Head of caudate nucleus (tissue), 42 donors: ENCODE measurements at regions of chr2 and their contacts with region 1.

Region 1: DNA sequence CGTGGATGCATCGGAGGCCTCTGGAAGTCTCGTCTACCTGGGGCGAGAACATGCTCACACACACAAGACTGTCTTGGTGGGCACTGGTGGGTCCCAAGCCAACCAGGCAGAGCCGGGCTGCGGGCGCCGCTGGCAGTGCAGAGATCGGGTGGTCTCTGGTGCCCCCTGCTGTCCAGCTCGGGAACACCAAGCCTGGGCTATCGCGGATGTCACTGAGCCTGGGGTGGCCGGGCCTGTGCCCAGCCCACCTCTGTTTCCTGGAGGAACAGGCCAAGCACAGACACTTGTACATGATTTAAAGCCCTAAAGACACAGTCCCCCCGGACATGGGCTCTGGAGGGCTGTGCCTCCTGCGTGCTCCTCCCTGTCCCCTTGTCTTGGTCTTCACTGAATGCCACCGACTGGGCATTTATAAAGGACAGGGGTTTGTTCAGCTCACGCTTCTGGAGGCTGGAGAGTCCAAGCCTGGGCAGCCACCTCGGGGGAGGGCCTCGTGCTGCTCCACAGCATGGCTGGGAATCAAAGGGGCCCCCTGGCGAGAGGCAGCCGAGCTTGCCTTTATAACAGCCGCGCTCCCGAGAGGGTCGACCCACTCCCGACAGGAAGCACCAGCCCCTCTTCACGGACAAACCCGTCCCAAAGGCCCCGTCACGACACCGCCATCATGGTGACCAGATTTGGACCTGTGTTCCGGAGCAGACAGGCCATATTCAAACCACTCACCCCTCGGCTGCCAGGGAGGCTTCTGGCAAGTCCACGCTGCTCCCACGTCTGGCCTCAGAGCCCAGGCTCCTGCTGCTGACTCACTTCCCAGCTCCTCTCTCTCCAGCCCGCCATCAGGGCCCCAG is 3.6 kb upstream of the OTOS start:
- DNase-seq: peak; percentile 65 to 95 (median 86)

Region 2: DNA sequence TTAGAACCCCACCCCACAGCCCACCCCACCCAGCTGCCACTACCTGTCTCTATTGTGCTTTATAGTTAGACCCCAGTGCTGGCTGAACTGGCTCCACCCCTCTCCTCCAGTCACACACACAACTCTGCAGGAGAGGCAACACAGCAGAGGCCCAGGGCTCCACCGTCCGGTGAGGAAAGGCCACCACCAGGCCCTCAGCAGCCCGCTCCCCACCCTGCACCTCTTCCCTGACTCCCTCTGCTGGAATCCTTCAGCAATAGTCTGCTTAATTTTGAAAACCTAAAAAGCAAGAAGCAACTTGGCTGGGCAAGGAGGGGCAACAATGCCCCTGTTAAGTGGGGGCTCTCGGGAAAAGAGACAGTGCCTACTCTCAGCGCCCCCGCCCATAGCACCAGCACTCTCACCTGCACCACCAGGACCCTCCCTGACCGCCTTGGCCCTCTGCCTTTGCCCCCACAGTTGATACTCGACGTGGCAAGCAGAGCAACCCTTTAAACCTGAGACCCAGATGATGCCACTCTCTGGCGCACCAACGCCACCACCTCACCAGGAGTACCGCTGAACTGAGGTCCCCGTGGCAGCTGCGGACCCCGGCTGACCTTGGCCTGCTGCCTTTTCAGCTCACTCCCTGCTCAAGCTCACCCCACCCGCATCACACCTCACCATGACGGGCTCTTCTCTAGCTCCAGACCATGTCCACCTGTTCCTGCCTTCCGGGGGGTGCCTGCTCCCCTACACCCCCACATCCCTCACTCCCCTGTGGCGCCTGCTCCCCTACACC is 164.6 kb before region 1 on chr2:
- intact Hi-C with region 1: no loop called
- DNase-seq: peak in 29 of 42 donors; percentile 11 to 78 (median 58)

Region 3: GRCh38 chr2:240021488-240022104 is 122.4 kb before region 1 on chr2:
- intact Hi-C with region 1: loop called (anchors 10 kb)
- DNase-seq: peak; percentile 40 to 87 (median 72)

Region 4: GRCh38 chr2:240056678-240057077 is 87.3 kb before region 1 on chr2:
- intact Hi-C with region 1: loop called (anchors 5 kb)
- DNase-seq: no peak

Region 5: DNA sequence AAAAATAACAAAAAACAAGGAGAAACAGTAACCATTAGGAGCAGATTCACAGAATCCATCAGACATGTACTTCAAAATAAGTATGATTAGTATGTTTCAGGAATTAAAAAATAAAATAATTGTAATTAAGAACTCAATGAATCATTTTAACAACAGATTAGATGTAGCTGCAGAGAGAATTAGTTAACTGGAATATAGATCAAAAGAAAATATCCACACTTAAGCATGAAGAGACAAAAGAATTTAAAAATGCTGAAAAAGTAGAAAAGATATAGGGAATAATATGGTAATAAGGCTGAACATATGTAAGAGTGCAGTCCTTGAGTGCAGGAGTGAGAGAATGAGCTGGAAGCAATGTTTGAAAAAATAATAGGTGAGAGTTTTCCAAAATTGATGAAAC is 66.6 kb before region 1 on chr2:
- intact Hi-C with region 1: no loop called
- DNase-seq: no peak

Region 6: DNA sequence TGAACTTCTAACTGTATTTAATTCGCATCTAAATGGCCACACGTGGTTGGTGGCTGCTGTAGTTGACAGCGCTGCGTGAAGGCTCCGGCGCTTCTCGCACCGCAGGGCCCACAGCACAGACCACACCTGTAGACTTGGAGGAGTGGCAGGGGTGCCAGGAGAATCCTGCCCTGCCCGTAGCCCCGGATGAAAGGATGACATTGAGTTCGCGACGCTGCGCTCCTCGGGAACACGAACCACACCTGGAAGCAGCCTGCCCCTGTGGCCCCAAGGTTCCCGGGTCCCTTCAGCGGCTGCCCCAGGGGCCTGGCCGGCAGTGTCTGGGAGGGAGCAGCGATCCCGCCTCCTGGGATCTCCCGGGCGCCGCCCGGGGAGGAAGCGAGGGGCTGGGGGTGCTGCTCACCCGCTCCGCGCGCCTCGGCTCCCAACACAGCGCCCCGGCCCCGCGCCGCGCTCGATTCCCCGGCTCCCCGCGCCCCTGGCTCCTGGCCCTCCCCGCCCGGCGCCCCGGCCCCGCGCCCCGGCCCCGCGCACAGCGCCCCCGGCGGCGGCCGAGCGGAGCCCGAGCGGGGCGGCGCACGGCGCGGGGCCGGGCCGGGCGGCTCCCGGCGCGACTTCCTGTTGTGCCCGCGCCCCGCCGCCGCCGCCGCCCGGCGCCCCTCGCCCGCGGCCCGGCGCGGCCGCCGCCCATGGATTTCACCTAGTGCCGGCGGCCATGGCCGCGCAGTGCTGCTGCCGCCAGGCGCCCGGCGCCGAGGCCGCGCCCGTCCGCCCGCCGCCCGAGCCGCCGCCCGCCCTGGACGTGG is 424.1 kb after region 1 on chr2 and contains the start of gene RNPEPL1:
- intact Hi-C with region 1: no loop called
- DNase-seq: peak in 34 of 42 donors; percentile 1 to 71 (median 48)